ENCODE measurements at regions of chr6 and their contacts with region 1.

Region 1: DNA sequence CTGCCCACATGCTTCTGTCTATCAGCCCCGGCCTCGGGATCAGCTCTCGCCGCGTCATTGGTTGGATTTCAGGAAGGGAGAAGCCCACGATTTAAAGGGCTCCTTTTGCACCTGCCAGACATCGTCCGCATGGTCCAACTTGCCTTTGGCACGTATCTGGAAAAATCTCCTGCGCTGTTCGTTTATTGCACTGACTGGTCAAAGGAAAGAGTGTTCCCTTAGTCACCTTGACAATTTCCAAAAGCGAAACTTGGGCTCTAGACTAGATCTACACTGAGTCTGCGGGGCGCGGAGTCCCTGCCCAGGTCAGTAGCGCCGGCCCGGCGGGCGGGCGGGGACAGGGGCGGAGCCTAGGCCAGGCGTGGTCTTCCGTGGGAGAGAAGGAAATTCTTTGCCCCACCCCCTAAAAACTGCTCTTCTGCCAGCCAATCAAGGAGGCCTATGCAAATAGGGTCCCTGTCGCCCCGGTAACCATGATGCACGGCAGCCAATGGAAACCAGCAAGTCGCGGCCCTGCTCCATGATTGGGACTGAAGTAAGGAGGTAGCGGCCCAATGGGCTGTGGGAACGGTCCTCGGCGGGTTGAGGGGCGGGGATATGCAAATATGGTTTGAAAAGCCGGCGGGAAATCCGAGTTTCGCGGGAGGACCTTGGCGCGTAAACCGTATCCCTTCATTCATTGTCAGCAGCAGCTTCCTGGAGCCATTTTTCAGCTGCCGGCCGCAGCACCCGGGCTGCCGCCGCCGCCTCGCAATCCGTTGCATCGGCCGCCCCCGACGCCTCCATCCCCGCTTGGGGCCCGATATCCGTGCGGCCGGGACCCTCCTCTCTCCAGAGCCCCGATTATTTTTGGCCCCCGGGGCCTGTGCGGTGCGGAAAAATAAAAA is at the start of gene E2F3:
- DNase-seq: peak; percentile 97 to 99
- ATAC-seq: peak; percentile 83 to 93 (median 85)
- H3K4me3 ChIP-seq: peak within 1 kb of the TSS; percentile 65
- H3K4me3 Mint-ChIP-seq: peak within 1 kb of the TSS; percentile 96
- H3K27ac ChIP-seq: peak within 1 kb of the TSS; percentile 73
- H3K27ac Mint-ChIP-seq: peak within 1 kb of the TSS; percentile 89 to 95
- H3K4me1 ChIP-seq: peaks cover 20% of the 10 kb centered on the region
- H3K4me1 Mint-ChIP-seq: peaks cover 25 to 29% of the 10 kb centered on the region in 2 donors
- H3K27me3 ChIP-seq: no peaks in the 10 kb centered on the region
- H3K27me3 Mint-ChIP-seq: no peaks in the 10 kb centered on the region
- CTCF ChIP-seq: no peak
- total RNA-seq, gene E2F3: 8.2 to 14.7 (median 12.2) TPM

Region 2: DNA sequence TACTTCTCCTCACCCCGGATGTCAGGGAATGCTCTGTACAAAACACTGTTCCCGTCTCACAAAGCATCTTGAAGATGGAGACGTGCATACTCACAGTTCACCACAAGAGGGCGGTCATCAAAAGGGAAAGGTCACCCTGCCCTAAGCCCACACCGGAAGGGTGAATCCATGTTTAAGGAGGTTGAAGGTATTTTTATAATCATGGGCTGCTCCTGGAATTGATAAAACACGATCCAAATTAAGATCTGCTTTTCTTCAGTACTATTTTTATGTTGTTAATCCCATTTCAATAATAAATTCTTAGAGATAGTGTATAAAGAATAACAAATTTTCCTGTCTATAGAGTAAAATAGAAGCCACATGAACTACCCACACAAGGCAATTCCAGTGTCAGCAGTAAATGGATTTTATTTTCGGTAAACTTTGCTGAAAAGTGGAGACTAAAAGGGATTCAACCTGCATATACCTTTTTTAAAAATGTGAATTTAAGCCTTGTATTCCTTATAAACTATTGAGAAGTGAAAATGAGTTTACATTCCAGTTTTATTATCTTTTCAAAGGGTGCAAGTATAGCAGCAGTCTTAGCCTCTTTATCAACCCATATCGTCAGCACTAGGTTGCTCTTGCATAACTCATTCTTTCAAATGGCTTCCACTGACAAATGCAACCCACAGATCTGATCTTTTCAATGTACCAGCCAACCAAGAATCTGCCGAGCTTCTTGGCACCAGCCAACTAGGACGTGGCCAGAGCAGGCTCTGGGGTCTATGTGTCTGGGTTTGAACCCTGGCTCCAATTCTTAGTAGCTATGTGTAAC is 109.5 kb before region 1 on chr6:
- intact Hi-C with region 1: loop called (anchors 5 kb)
- DNase-seq: peak; percentile 59 to 89
- ATAC-seq: peak; percentile 82 to 98 (median 97)
- H3K4me3 ChIP-seq: no peak overlapping the region
- H3K4me3 Mint-ChIP-seq: no peak overlapping the region
- H3K27ac ChIP-seq: no peak overlapping the region
- H3K27ac Mint-ChIP-seq: no peak overlapping the region
- H3K4me1 ChIP-seq: no peaks in the 10 kb centered on the region
- H3K4me1 Mint-ChIP-seq: peaks cover 0 to 6% of the 10 kb centered on the region in 2 donors
- H3K27me3 ChIP-seq: no peaks in the 10 kb centered on the region
- H3K27me3 Mint-ChIP-seq: peaks cover 0 to under 1% of the 10 kb centered on the region in 2 donors
- CTCF ChIP-seq: peak; percentile 97

Region 3: GRCh38 chr6:20319520-20320357 is 81.7 kb before region 1 on chr6:
- intact Hi-C with region 1: loop called (anchors 5 kb)
- DNase-seq: peak; percentile 58 to 91
- ATAC-seq: peak; percentile 79 to 83 (median 80)
- H3K4me3 ChIP-seq: peak overlapping the region; percentile 41
- H3K4me3 Mint-ChIP-seq: peak overlapping the region; percentile 92
- H3K27ac ChIP-seq: peak overlapping the region; percentile 71
- H3K27ac Mint-ChIP-seq: peak overlapping the region; percentile 94 to 98
- H3K4me1 ChIP-seq: peaks cover 11% of the 10 kb centered on the region
- H3K4me1 Mint-ChIP-seq: peaks cover 17 to 22% of the 10 kb centered on the region in 2 donors
- H3K27me3 ChIP-seq: no peaks in the 10 kb centered on the region
- H3K27me3 Mint-ChIP-seq: no peaks in the 10 kb centered on the region
- CTCF ChIP-seq: no peak

Region 4: DNA sequence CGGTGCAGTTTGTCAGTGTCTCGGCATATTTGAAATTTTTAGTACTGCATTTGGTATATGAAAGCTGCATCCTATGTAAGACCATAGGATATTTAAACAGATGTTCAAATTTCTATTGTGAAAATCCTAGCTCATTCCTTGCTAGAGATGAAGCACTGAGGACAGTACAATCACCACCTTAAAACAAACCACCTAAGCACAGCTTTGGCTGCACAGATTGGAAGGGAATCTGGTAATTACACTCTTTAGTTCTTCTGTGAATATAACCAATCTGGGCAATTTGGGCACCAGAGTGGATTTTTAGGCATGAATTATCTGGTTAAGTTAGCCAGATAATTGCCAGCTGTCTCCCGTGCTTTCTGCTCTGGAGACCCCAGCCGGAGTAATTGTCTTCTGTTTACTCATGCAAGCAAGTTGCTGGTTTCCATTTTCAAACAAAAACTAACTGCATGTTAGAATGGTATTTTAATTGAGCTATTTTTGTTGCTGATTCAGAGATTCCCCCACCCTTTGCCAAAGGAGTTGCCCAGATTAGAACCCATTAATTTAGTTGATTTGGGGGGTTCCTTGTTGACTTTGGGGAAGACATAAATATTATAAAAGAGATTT is 37.1 kb after region 1 on chr6:
- intact Hi-C with region 1: no loop called
- DNase-seq: no peak
- ATAC-seq: no peak
- H3K4me3 ChIP-seq: no peak overlapping the region
- H3K4me3 Mint-ChIP-seq: no peak overlapping the region
- H3K27ac ChIP-seq: no peak overlapping the region
- H3K27ac Mint-ChIP-seq: peak overlapping the region in 1 of 2 donors; percentile 41
- H3K4me1 ChIP-seq: no peaks in the 10 kb centered on the region
- H3K4me1 Mint-ChIP-seq: peaks cover 14 to 28% of the 10 kb centered on the region in 2 donors
- H3K27me3 ChIP-seq: no peaks in the 10 kb centered on the region
- H3K27me3 Mint-ChIP-seq: no peaks in the 10 kb centered on the region
- CTCF ChIP-seq: no peak

Region 5: DNA sequence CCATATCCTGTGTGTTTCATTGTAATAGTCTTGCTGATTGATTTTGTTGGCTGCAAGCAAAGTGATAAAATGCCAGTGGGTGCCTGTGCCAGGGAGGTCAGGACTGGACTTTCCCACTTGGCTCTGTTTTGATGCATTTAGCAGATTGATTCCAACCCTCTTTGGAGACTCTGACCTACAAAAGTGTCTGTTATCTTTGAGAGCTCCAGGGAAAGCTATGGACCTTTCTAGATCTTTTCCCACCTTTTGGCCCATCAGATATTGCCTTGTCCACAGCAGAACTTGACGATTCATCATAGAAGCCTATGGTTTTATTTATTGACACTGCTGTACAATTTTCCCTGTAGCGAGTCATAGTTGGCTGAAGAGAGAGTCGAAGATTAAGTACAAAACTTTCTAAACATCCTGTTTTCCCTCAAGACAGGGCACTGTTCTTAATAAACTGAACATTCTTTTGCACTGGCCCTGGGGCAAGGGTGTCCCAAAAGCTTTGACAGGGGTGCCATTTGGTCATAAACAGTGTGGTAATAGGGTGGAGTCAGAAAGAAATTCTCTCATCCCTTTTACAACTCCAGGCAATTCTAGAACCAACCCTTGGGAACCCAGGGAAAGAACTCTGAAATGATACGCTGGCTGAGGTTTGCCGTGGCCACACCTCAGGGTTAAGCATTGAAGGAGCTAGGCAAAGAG is 53.9 kb after region 1 on chr6:
- intact Hi-C with region 1: loop called (anchors 2 kb)
- DNase-seq: no peak
- ATAC-seq: no peak
- H3K4me3 ChIP-seq: no peak overlapping the region
- H3K4me3 Mint-ChIP-seq: no peak overlapping the region
- H3K27ac ChIP-seq: no peak overlapping the region
- H3K27ac Mint-ChIP-seq: peak overlapping the region in 1 of 2 donors; percentile 9
- H3K4me1 ChIP-seq: peaks cover 5% of the 10 kb centered on the region
- H3K4me1 Mint-ChIP-seq: peaks cover 28 to 55% of the 10 kb centered on the region in 2 donors
- H3K27me3 ChIP-seq: no peaks in the 10 kb centered on the region
- H3K27me3 Mint-ChIP-seq: no peaks in the 10 kb centered on the region
- CTCF ChIP-seq: no peak

Region 6: GRCh38 chr6:20534295-20535262 is 133.1 kb after region 1 on chr6 and contains the start of gene CDKAL1:
- intact Hi-C with region 1: loop called (anchors 1 kb)
- DNase-seq: peak; percentile 87 to 95
- ATAC-seq: peak; percentile 92 to 96 (median 95)
- H3K4me3 ChIP-seq: peak within 1 kb of the TSS; percentile 89
- H3K4me3 Mint-ChIP-seq: peak within 1 kb of the TSS; percentile 97
- H3K27ac ChIP-seq: peak within 1 kb of the TSS; percentile 86
- H3K27ac Mint-ChIP-seq: peak within 1 kb of the TSS; percentile 95
- H3K4me1 ChIP-seq: peaks cover 9% of the 10 kb centered on the region
- H3K4me1 Mint-ChIP-seq: peaks cover 29 to 45% of the 10 kb centered on the region in 2 donors
- H3K27me3 ChIP-seq: no peaks in the 10 kb centered on the region
- H3K27me3 Mint-ChIP-seq: peaks cover 9 to 15% of the 10 kb centered on the region in 2 donors
- CTCF ChIP-seq: no peak
- total RNA-seq, gene CDKAL1: 26.0 to 32.8 (median 28.9) TPM

Region 7: GRCh38 chr6:21593412-21593926 is 1192.0 kb after region 1 on chr6 and contains the start of gene SOX4:
- intact Hi-C with region 1: loop called (anchors 5 kb)
- DNase-seq: peak; percentile 62 to 84
- ATAC-seq: peak; percentile 67 to 78 (median 74)
- H3K4me3 ChIP-seq: peak within 1 kb of the TSS; percentile 47
- H3K4me3 Mint-ChIP-seq: peak within 1 kb of the TSS; percentile 91
- H3K27ac ChIP-seq: peak within 1 kb of the TSS; percentile 12
- H3K27ac Mint-ChIP-seq: no peak within 1 kb of the TSS
- H3K4me1 ChIP-seq: peaks cover 30% of the 10 kb centered on the region
- H3K4me1 Mint-ChIP-seq: peaks cover 24 to 28% of the 10 kb centered on the region in 2 donors
- H3K27me3 ChIP-seq: peaks cover 6% of the 10 kb centered on the region
- H3K27me3 Mint-ChIP-seq: peaks cover 2 to 8% of the 10 kb centered on the region in 2 donors
- CTCF ChIP-seq: no peak
- total RNA-seq, gene SOX4: 4.4 to 7.6 (median 6.4) TPM